Uterus (tissue), 4 donors: ENCODE measurements at regions of chrX and their contacts with region 1.

Region 1: GRCh38 chrX:1453951-1454785 is 1.5 kb upstream of the ASMTL start:
- DNase-seq: peak; percentile 82 to 90
- H3K4me3 ChIP-seq: peak overlapping the region; percentile 36 to 86
- H3K27ac ChIP-seq: peak overlapping the region; percentile 59 to 97
- H3K4me1 ChIP-seq: peaks cover 3 to 10% of the 10 kb centered on the region in 2 donors
- H3K27me3 ChIP-seq: no peaks in the 10 kb centered on the region
- CTCF ChIP-seq: peak; percentile 89 to 99 (median 95)
- POLR2A ChIP-seq: no peak

Region 2: GRCh38 chrX:1391707-1392375 is 62.3 kb before region 1 on chrX and contains the start of gene SLC25A6:
- intact Hi-C with region 1: loop called (anchors 5 kb)
- DNase-seq: peak; percentile 98 to 100
- H3K4me3 ChIP-seq: peak within 1 kb of the TSS; percentile 96 to 99
- H3K27ac ChIP-seq: peak within 1 kb of the TSS; percentile 94 to 99
- H3K4me1 ChIP-seq: peaks cover 0 to 11% of the 10 kb centered on the region in 2 donors
- H3K27me3 ChIP-seq: no peaks in the 10 kb centered on the region
- CTCF ChIP-seq: peak in 2 of 4 experiments; percentile 2 to 32
- POLR2A ChIP-seq: peak; percentile 57 to 92
- total RNA-seq, gene SLC25A6: 140 to 289 (median 207) TPM

Region 3: GRCh38 chrX:1591102-1591900 is 137.1 kb after region 1 on chrX and contains the start of gene AKAP17A:
- intact Hi-C with region 1: loop called (anchors 5 kb)
- DNase-seq: peak; percentile 93 to 97
- H3K4me3 ChIP-seq: peak within 1 kb of the TSS; percentile 90 to 94
- H3K27ac ChIP-seq: peak within 1 kb of the TSS; percentile 79 to 86
- H3K4me1 ChIP-seq: no peaks in the 10 kb centered on the region
- H3K27me3 ChIP-seq: no peaks in the 10 kb centered on the region
- CTCF ChIP-seq: peak; percentile 17 to 37 (median 28)
- POLR2A ChIP-seq: peak; percentile 66 to 86
- total RNA-seq, gene AKAP17A: 21.5 to 52.9 (median 29.6) TPM